ENCODE measurements at regions of chr1 and their contacts with region 1.

Region 1: GRCh38 chr1:88877382-88877825 is 14.0 kb downstream of the GTF2B start:
- DNase-seq: peak; percentile 62
- ATAC-seq: peak; percentile 48
- H3K4me3 ChIP-seq: no peak overlapping the region
- H3K27ac ChIP-seq: no peak overlapping the region
- H3K4me1 ChIP-seq: peaks cover 8% of the 10 kb centered on the region; the same call in 1 of the 2 replicates
- H3K27me3 ChIP-seq: no peaks in the 10 kb centered on the region
- CTCF ChIP-seq: peak; percentile 70

Region 2: GRCh38 chr1:88608139-88608943 is 269.1 kb before region 1 on chr1:
- CTCF ChIA-PET with region 1: interaction called, 3 read pairs
- POLR2A ChIA-PET with region 1: no interaction called
- intact Hi-C with region 1: loop called (anchors 1 kb)
- DNase-seq: peak; percentile 71
- ATAC-seq: peak; percentile 54
- H3K4me3 ChIP-seq: no peak overlapping the region
- H3K27ac ChIP-seq: no peak overlapping the region
- H3K4me1 ChIP-seq: peaks cover 23% of the 10 kb centered on the region
- H3K27me3 ChIP-seq: no peaks in the 10 kb centered on the region
- CTCF ChIP-seq: peak; percentile 84